K562 (cell line): ENCODE measurements at regions of chr1 and their contacts with region 1.

Region 1: DNA sequence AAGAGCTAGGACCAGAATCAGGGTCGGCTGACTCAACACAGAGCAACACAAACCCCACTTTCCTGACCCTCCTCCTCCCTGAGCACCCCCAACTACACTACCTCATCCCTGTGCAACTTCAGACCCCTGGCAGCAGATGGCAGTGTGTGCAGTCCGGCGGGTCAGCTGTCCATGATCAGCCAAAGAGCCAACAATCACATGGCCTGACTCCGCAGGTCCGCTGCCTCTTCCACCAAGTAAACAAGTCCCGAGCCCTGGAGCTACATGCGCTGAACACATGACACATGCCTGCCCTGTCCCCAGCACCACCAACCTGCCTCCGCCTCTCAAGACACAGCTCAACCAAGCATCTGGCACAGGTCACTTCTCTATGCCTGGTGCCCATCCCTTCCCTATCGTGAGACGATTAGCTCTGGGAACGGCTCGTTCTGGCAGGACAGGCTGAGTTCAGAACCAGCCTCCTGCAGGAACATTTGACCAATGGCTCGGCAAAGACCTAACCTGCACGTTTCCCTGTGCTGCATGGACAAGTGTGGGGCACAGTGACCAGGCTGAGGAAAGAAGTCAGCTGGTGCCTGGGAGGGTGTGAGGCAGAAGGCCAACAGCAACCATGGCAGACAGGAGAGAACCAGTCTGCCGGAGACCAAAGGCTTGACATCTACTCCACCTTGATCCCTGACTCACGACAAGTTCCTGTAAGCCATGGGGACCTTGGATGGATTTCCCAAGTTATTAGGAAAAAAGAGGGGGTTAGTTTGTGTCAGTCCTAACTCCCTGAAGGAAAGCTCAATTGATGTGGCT is 60.3 kb downstream of the CD46 start:
- DNase-seq: peak; percentile 75 to 79 (median 78)
- ATAC-seq: peak; percentile 90
- H3K4me3 ChIP-seq: no peak overlapping the region
- H3K27ac ChIP-seq: no peak overlapping the region
- H3K4me1 ChIP-seq: peaks cover 34 to 60% of the 10 kb centered on the region in 2 experiments
- H3K27me3 ChIP-seq: no peaks in the 10 kb centered on the region
- CTCF ChIP-seq: peak; percentile 85 to 88 (median 85)
- EP300 ChIP-seq: no peak
- POLR2A ChIP-seq: no peak
- RAD21 ChIP-seq: peak; percentile 71 to 82

Region 2: GRCh38 chr1:207876131-207876530 is 64.0 kb after region 1 on chr1:
- CTCF ChIA-PET with region 1: no interaction called
- POLR2A ChIA-PET with region 1: no interaction called
- in situ Hi-C with region 1: no loop called
- intact Hi-C with region 1: loop called (anchors 1 kb)
- DNase-seq: peak; percentile 52 to 69 (median 60)
- ATAC-seq: peak; percentile 86
- H3K4me3 ChIP-seq: no peak overlapping the region
- H3K27ac ChIP-seq: no peak overlapping the region
- H3K4me1 ChIP-seq: peaks cover 17 to 24% of the 10 kb centered on the region in 2 experiments
- H3K27me3 ChIP-seq: no peaks in the 10 kb centered on the region
- CTCF ChIP-seq: peak; percentile 76 to 83 (median 78)
- EP300 ChIP-seq: no peak
- POLR2A ChIP-seq: no peak
- RAD21 ChIP-seq: peak; percentile 70 to 83